ENCODE measurements at regions of chr1 and their contacts with region 1.

Region 1: DNA sequence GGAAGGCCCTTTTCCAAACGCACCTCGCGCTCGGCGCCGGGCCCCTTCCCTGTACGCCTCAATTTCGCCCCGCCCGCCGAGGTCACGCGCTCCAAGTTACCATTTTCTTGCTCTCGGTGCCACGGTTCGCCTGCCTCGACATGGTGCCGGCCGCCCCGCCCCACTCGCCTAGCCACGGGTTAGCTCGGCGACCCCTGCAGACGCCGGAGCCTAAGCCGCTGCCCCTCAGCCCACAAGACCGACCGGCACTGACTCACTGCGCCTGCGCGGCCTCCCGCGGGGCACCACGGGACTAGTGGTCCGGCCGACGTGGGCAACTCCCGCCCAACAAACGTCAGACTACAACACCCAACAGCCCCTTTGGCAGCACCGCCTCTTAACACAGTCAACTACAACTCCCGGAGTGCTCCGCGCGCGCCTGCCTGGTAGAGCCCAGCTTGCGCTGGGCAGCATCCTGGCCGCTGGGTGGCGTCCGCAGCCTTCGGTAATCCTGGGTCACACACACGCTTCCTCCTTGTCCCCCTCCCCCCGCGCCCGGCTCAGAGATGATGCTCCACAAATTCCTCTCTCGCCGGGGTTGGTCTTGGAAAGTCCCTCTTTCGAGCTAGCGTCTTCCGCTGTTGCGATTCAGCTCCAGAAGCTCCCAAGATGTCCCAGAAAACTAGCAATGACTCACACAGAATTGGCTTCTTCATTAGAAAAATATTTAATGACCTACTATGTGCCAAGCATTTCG is at the start of gene TRAPPC3:
- DNase-seq: peak; percentile 100
- H3K4me3 ChIP-seq: peak within 1 kb of the TSS; percentile 64 to 84 (median 67)
- H3K27ac ChIP-seq: peak within 1 kb of the TSS; percentile 99
- H3K4me1 ChIP-seq: peaks cover 25% of the 10 kb centered on the region
- H3K27me3 ChIP-seq: no peaks in the 10 kb centered on the region
- CTCF ChIP-seq: peak; percentile 89 to 98
- total RNA-seq, gene TRAPPC3: 73.2 to 96.5 TPM

Region 2: GRCh38 chr1:36161641-36162531 is 12.5 kb after region 1 on chr1:
- CTCF ChIA-PET with region 1: interaction called, 5 read pairs
- dilution Hi-C with region 1: no loop called
- in situ Hi-C with region 1: no loop called
- intact Hi-C with region 1: loop called (anchors 1 kb)
- DNase-seq: peak; percentile 94
- H3K4me3 ChIP-seq: peak overlapping the region; percentile 7 to 41 (median 8)
- H3K27ac ChIP-seq: peak overlapping the region; percentile 83
- H3K4me1 ChIP-seq: peaks cover 73% of the 10 kb centered on the region
- H3K27me3 ChIP-seq: no peaks in the 10 kb centered on the region
- CTCF ChIP-seq: no peak

Region 3: DNA sequence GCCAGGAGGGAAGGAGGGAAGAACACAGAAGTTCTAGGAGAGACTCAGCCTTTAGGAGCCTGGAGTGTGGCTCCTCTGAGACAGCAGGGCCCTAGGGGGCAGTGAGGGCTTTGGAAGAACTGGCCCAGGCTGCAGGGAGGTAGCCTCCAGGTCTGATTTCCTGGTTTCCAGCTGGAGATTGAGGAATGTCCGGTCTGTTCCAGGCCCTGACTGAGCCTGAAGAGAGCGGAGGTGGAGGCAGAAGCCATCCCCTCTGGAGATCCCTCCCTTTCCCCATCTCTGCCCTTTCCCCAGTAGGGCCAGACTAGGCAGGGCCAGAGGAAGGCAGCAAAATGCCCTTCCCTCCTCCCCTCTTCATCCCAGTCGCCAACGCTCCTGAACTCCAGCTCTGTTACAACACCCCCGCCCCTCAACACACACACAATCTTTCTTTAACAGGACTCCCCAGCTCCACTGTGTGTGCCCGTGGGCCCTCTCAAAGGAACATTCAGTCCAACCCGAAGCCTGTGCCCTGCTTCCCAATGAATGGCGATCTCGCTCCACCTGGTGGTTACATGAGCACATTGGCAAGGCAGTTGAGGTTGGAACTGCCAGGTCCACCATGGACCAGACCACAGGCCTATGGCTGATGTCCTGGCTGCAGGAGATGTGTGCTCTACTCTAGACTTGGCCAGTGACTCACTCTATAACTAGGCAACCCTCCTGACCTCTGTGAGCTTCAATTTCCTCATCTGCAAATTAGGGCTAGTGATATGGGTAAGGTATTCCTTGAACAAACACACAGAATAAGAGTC is 38.6 kb after region 1 on chr1:
- CTCF ChIA-PET with region 1: interaction called, 18 read pairs
- dilution Hi-C with region 1: no loop called
- in situ Hi-C with region 1: no loop called
- intact Hi-C with region 1: loop called (anchors 1 kb)
- DNase-seq: peak; percentile 88
- H3K4me3 ChIP-seq: no peak overlapping the region
- H3K27ac ChIP-seq: peak overlapping the region; percentile 60
- H3K4me1 ChIP-seq: peaks cover 8% of the 10 kb centered on the region
- H3K27me3 ChIP-seq: no peaks in the 10 kb centered on the region
- CTCF ChIP-seq: peak; percentile 92 to 94

Region 4: GRCh38 chr1:36223993-36224536 is 74.7 kb after region 1 on chr1 and contains the start of gene THRAP3:
- CTCF ChIA-PET with region 1: no interaction called
- dilution Hi-C with region 1: loop called (anchors 5 kb)
- in situ Hi-C with region 1: no loop called
- intact Hi-C with region 1: loop called (anchors 1 kb)
- DNase-seq: peak; percentile 100
- H3K4me3 ChIP-seq: peak within 1 kb of the TSS; percentile 86 to 90 (median 89)
- H3K27ac ChIP-seq: peak within 1 kb of the TSS; percentile 98
- H3K4me1 ChIP-seq: peaks cover 8% of the 10 kb centered on the region
- H3K27me3 ChIP-seq: no peaks in the 10 kb centered on the region
- CTCF ChIP-seq: no peak
- total RNA-seq, gene THRAP3: 106 to 128 TPM

Region 5: GRCh38 chr1:36300526-36300925 is 151.1 kb after region 1 on chr1:
- CTCF ChIA-PET with region 1: interaction called, 3 read pairs
- dilution Hi-C with region 1: no loop called
- in situ Hi-C with region 1: no loop called
- intact Hi-C with region 1: loop called (anchors 1 kb)
- DNase-seq: peak; percentile 70
- H3K4me3 ChIP-seq: no peak overlapping the region
- H3K27ac ChIP-seq: peak overlapping the region; percentile 87
- H3K4me1 ChIP-seq: peaks cover 28% of the 10 kb centered on the region
- H3K27me3 ChIP-seq: no peaks in the 10 kb centered on the region
- CTCF ChIP-seq: no peak

Region 6: GRCh38 chr1:36369061-36369861 is 219.9 kb after region 1 on chr1:
- CTCF ChIA-PET with region 1: interaction called, 4 read pairs
- dilution Hi-C with region 1: no loop called
- in situ Hi-C with region 1: no loop called
- intact Hi-C with region 1: loop called (anchors 2 kb)
- DNase-seq: peak; percentile 50
- H3K4me3 ChIP-seq: no peak overlapping the region
- H3K27ac ChIP-seq: no peak overlapping the region
- H3K4me1 ChIP-seq: peaks cover 24% of the 10 kb centered on the region
- H3K27me3 ChIP-seq: no peaks in the 10 kb centered on the region
- CTCF ChIP-seq: peak; percentile 85 to 90

Region 7: GRCh38 chr1:36516372-36517325 is 367.2 kb after region 1 on chr1:
- CTCF ChIA-PET with region 1: no interaction called
- dilution Hi-C with region 1: no loop called
- in situ Hi-C with region 1: no loop called
- intact Hi-C with region 1: loop called (anchors 1 kb)
- DNase-seq: peak; percentile 36
- H3K4me3 ChIP-seq: no peak overlapping the region
- H3K27ac ChIP-seq: no peak overlapping the region
- H3K4me1 ChIP-seq: peaks cover 22% of the 10 kb centered on the region
- H3K27me3 ChIP-seq: no peaks in the 10 kb centered on the region
- CTCF ChIP-seq: peak; percentile 89 to 95

Measured in mammary epithelial cell (primary cell).